ENCODE measurements at regions of chr15 and their contacts with region 1.

Region 1: DNA sequence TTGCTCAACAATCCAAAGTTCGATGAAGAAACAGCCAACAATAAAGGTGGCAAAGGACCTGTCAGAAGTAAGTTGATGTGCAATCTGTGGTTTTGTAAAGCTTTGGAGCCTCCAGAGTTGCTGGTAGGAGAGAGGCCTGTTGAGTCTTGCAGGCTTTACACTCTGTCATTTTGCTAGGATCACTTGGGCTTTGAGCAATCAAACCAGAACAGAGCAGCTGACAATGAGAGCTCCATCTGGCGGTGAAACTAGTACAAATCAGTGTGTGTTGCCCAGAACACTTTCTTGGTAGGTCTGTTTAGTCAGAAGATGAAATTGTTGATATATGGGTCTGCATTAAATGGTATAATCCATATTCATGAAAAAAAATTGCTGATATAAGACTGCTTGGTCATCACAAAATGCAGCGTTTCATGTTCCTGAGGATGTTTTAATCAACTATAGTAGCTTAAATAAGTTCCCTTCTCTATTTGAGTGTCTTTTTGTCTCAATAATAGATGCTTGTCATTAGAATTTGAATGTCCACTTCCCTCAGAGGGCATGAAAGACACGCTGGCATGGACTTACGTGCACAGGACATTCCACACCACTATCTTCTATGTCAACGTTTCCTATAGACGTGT is 25.7 kb downstream of the TMOD2 start:
- DNase-seq: peak; percentile 64
- H3K4me3 ChIP-seq: no peak overlapping the region
- H3K27ac ChIP-seq: no peak overlapping the region
- H3K4me1 ChIP-seq: no peaks in the 10 kb centered on the region
- H3K27me3 ChIP-seq: no peaks in the 10 kb centered on the region
- CTCF ChIP-seq: peak; percentile 44 to 74 (median 66)
- POLR2A ChIP-seq: no peak

Region 2: GRCh38 chr15:51649659-51650521 is 127.2 kb before region 1 on chr15:
- intact Hi-C with region 1: loop called (anchors 2 kb)
- DNase-seq: peak; percentile 4 to 7
- H3K4me3 ChIP-seq: no peak overlapping the region
- H3K27ac ChIP-seq: no peak overlapping the region
- H3K4me1 ChIP-seq: no peaks in the 10 kb centered on the region
- H3K27me3 ChIP-seq: no peaks in the 10 kb centered on the region
- CTCF ChIP-seq: peak; percentile 28 to 91 (median 72)
- POLR2A ChIP-seq: no peak

Measured in thyroid gland (tissue), 4 donors.